ENCODE measurements at regions of chr4 and their contacts with region 1.

Region 1: GRCh38 chr4:40316782-40317635 is 18.1 kb upstream of the CHRNA9 start:
- DNase-seq: peak; percentile 73
- ATAC-seq: peak; percentile 80
- H3K4me3 Mint-ChIP-seq: peak overlapping the region; percentile 77
- H3K27ac Mint-ChIP-seq: peak overlapping the region; percentile 100
- H3K4me1 Mint-ChIP-seq: peaks cover 58% of the 10 kb centered on the region
- H3K27me3 Mint-ChIP-seq: no peaks in the 10 kb centered on the region

Region 2: GRCh38 chr4:39181905-39182638 is 1134.9 kb before region 1 on chr4 and contains the start of gene WDR19:
- CTCF ChIA-PET with region 1: no interaction called
- POLR2A ChIA-PET with region 1: no interaction called
- intact Hi-C with region 1: loop called in 1 of 2 experiments (anchors 5 kb)
- DNase-seq: peak; percentile 99
- ATAC-seq: peak; percentile 99
- H3K4me3 Mint-ChIP-seq: no peak within 1 kb of the TSS
- H3K27ac Mint-ChIP-seq: no peak within 1 kb of the TSS
- H3K4me1 Mint-ChIP-seq: peaks cover 8% of the 10 kb centered on the region
- H3K27me3 Mint-ChIP-seq: peaks cover 3% of the 10 kb centered on the region
- total RNA-seq, gene WDR19: 12.1 to 16.2 TPM

Region 3: DNA sequence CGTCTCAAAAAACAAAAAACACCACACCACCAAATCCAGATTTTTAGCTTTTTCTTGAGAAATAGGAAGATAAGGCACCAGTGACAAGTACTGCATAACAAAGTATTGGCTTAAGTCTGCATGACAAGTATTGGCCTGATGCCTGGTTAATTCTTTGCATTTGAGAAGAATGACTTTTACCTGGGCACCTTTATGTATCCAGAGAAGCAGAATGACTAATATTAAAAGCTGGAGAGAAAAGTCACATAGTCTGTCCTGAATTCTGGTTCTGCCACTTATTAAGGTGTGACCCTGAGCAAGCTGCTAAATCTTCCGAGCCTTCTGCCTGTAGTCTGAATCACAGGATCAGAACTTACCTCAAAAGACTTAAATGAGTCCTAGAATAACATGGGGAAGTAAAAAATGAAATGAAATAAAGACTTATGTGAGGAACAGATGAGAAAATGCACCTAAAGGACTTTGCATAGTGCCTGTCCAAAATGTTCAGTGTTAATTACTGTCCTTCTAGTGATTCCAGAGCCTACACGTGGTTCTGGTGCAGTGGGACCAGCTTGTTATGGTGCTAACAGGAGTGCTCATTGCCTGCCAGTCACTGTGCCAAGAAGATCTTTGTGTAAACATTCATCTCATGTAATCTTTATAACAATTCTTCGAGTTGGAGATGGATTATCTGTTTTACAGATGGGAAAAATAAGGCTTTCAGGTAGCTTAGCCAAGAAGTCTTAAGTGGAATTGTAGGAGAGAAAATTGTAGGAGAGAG is 821.4 kb before region 1 on chr4:
- CTCF ChIA-PET with region 1: no interaction called
- POLR2A ChIA-PET with region 1: no interaction called
- intact Hi-C with region 1: no loop called
- DNase-seq: no peak
- ATAC-seq: no peak
- H3K4me3 Mint-ChIP-seq: no peak overlapping the region
- H3K27ac Mint-ChIP-seq: no peak overlapping the region
- H3K4me1 Mint-ChIP-seq: no peaks in the 10 kb centered on the region
- H3K27me3 Mint-ChIP-seq: no peaks in the 10 kb centered on the region

Region 4: DNA sequence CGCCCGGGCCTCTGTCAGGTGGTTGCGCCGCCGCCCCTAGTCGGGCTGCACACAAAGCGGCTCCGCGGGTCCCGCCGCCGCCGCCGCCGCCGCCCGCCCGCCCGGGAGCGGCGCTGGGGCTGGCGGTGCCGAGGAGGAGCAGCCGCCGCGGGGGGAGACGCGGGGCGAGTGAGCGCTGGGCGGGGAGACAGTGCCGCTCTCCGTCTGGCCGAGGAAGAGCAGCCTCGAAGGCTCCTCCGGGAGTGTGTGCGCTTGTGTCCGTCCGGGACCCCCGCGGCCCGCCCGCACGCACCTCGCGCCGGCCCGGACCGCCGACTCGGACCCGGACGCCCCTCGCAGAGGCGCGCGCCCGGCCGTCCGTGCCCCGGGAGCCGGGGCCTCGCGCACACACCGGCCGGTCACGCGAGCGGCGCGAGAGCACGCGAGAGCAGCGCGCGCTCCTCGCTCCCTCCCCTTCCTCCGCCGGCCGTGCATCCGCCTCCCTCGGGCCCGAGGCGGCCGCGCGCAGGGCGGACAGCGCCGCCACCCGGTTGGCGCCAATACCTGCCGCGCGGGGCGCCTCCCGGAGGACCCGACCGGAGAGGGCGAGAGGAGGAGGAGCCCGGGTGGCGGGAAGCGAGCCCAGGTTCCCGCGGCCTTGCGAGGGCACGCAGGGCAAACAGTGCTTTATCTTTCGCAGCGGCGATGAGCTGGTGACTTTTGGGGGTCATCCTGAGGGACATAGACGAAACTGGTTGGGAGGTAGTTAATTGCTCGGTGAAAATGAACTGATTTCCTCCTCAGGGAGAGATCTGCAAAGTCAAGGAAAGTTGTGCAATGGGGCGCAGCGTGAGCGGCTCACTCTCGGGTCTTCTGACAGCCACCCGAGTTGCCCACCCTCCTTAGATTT is 339.3 kb before region 1 on chr4 and contains the start of gene PDS5A:
- CTCF ChIA-PET with region 1: interaction called, 3 read pairs
- POLR2A ChIA-PET with region 1: no interaction called
- intact Hi-C with region 1: loop called in 1 of 2 experiments (anchors 2 kb)
- DNase-seq: peak; percentile 95
- ATAC-seq: peak; percentile 90
- H3K4me3 Mint-ChIP-seq: peak within 1 kb of the TSS; percentile 80
- H3K27ac Mint-ChIP-seq: peak within 1 kb of the TSS; percentile 98
- H3K4me1 Mint-ChIP-seq: peaks cover 38% of the 10 kb centered on the region
- H3K27me3 Mint-ChIP-seq: no peaks in the 10 kb centered on the region
- total RNA-seq, gene PDS5A: 98.5 to 102 TPM

Region 5: DNA sequence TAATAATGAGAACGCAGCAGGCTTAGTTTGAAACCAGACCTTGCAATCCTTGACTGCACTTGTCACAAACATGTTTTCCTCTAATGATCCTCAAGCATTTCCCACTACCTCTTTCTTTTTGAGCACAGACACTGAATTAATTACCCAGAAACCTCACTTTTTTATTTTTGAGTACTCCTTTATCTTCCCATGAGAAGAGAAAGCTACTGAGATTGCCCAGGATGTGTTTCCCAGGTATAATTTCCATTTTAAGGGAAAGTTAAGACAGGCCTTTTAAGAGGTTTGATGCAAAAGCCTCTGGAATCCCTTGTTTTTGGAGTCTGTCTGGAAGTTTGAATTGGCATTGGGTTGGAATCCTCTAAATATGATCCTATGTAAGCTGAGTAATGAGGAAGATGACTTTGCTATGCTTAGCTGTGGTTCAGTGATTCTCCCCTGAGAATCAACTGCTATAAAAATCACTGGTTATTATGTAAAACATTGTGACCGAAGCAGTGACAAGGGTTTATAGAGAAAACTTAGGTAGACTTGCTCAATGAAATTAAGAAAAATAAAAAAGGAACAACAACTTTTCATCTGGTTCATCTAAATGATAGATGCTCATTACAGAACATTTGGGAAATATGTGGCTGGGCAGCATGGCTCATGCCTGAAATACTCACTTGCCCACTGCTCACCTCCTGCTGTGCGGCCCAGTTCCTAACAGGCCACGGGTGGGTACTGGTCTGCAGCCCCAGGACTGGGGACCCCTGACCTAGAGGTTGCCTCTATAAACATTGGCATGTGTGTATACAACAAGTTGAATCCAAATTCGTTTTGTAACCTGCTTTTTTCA is 131.0 kb before region 1 on chr4:
- CTCF ChIA-PET with region 1: interaction called, 20 read pairs
- POLR2A ChIA-PET with region 1: interaction called, 9 read pairs
- intact Hi-C with region 1: no loop called
- DNase-seq: no peak
- ATAC-seq: no peak
- H3K4me3 Mint-ChIP-seq: no peak overlapping the region
- H3K27ac Mint-ChIP-seq: peak overlapping the region; percentile 25
- H3K4me1 Mint-ChIP-seq: peaks cover 75% of the 10 kb centered on the region
- H3K27me3 Mint-ChIP-seq: no peaks in the 10 kb centered on the region

Region 6: DNA sequence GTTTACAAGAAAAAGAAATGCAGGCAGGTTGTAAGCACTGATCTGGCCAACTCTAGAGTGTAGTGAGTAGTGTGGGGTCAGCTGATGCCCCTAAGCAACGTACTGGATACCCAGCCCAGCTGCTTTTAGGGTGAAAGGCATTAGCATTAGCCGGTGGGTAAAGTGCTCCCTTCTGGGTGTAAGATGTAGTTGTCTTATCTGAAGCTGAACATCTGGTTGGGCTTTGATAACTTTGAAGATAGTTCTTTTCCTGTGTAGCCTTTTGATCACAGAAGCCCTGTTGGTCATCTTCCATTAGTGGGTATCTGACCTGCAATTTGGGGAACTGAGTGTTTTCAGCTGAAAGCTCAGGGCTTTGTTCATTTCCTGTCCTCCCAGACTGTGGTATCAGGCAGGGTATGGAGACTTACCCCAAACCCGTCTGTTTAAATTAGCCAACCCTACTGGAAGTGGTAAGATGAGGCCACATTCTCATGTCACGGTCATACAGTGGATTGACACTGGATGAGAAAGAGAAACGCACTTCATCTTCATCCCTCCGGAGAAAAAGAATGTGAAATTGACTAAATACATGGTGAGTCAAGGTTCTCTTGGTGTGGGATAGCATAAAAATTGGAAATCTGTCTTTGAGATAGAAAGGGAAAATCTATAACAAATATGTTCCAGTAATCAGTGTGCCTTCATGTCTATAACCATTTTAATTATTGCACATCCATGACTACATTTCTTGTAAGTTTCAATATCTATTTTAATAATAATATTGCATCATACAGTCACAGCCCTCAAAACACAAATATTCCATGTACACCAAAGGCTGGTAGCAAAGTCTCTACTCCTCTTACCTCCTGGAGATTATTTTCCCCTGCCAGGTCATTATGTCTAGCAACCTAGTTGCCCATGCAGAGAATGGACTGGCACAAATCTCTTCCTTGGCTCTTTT is 111.5 kb before region 1 on chr4:
- CTCF ChIA-PET with region 1: interaction called, 17 read pairs
- POLR2A ChIA-PET with region 1: interaction called, 27 read pairs
- intact Hi-C with region 1: loop called (anchors 1 kb)
- DNase-seq: peak; percentile 55
- ATAC-seq: peak; percentile 59
- H3K4me3 Mint-ChIP-seq: peak overlapping the region; percentile 98
- H3K27ac Mint-ChIP-seq: peak overlapping the region; percentile 100
- H3K4me1 Mint-ChIP-seq: peaks cover 62% of the 10 kb centered on the region
- H3K27me3 Mint-ChIP-seq: no peaks in the 10 kb centered on the region

Region 7: DNA sequence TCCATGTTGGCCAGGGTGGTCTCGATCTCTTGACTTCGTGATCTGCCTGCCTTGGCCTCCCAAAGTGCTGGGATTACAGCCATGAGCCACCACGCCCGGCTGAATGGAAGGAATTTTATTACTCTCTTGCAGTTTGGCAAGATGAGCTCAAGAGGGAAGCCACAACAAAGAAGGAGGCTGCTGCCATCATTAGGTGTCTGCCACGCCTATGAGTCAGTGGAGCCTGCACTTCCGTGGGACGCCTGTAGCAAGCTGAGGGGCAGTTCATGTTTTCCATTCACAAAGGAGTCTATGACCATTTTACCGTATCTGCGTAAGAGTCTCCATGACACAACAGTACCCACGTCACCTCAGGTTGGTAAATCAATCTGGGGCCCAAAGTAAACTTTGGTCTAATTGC is 33.0 kb before region 1 on chr4:
- CTCF ChIA-PET with region 1: interaction called, 8 read pairs
- POLR2A ChIA-PET with region 1: interaction called, 7 read pairs
- intact Hi-C with region 1: loop called in 1 of 2 experiments (anchors 2 kb)
- DNase-seq: peak; percentile 89
- ATAC-seq: peak; percentile 94
- H3K4me3 Mint-ChIP-seq: peak overlapping the region; percentile 38
- H3K27ac Mint-ChIP-seq: peak overlapping the region; percentile 96
- H3K4me1 Mint-ChIP-seq: peaks cover 60% of the 10 kb centered on the region
- H3K27me3 Mint-ChIP-seq: no peaks in the 10 kb centered on the region

Measured in activated CD4-positive, alpha-beta T cell treated with anti-CD3 and anti-CD28 coated beads for 36 hours (primary cell).